ENCODE measurements at regions of chr2 and their contacts with region 1.

Region 1: GRCh38 chr2:65416945-65417344 is 15.5 kb downstream of the SPRED2 start:
- DNase-seq: no peak
- H3K4me3 ChIP-seq: no peak overlapping the region
- H3K4me3 Mint-ChIP-seq: peak overlapping the region in 1 of 2 donors; percentile 9
- H3K27ac ChIP-seq: no peak overlapping the region
- H3K27ac Mint-ChIP-seq: no peak overlapping the region
- H3K4me1 ChIP-seq: peaks cover 7 to 13% of the 10 kb centered on the region in 2 donors
- H3K4me1 Mint-ChIP-seq: peaks cover 13% of the 10 kb centered on the region
- H3K27me3 ChIP-seq: peaks cover 31 to 39% of the 10 kb centered on the region in 2 donors
- H3K27me3 Mint-ChIP-seq: peaks cover 32 to 42% (median 34%) of the 10 kb centered on the region in 3 donors
- CTCF ChIP-seq: no peak

Region 2: DNA sequence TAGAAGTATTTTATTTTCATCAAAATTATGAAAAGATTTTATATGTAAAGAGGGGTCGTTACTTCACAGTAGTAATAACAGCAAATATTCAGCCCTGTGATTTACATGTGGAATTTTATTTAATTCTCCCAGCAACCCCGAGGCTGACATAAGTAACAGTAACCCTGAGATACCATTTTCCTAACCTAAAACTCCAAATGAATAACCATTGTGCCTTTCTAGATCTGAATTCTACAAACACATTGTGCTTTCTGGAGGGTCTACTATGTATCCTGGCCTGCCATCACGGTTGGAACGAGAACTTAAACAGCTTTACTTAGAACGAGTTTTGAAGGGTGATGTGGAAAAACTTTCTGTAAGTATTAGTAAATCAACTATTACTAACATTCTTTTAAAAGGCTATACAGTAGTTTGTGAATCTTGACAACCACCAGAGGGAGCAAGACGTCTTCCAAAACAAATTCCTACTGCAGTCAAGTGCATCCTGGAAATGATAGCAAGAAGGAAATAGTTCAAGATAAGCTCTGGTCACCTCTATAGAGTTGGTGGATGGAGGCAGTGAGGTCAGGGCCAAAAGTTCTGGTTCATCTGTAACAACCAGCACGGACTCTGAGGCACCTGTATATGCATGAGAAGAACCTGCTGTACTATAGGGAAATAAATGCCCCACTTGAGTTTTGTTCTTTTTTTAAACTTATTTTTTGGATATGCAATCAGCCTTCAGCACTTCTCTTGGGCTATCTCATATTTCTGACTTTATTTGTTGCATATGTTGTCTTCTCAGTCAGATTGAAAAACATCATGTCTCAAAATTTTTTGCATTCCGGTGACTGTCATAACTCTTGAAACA is 151.9 kb before region 1 on chr2:
- intact Hi-C with region 1: no loop called
- DNase-seq: peak; percentile 15 to 40 (median 24)
- H3K4me3 ChIP-seq: no peak overlapping the region
- H3K4me3 Mint-ChIP-seq: no peak overlapping the region
- H3K27ac ChIP-seq: no peak overlapping the region
- H3K27ac Mint-ChIP-seq: peak overlapping the region in 1 of 7 donors; percentile 21
- H3K4me1 ChIP-seq: no peaks in the 10 kb centered on the region
- H3K4me1 Mint-ChIP-seq: no peaks in the 10 kb centered on the region
- H3K27me3 ChIP-seq: no peaks in the 10 kb centered on the region
- H3K27me3 Mint-ChIP-seq: peaks cover 0 to 2% (median 0%) of the 10 kb centered on the region in 3 donors
- CTCF ChIP-seq: peak; percentile 81

Region 3: DNA sequence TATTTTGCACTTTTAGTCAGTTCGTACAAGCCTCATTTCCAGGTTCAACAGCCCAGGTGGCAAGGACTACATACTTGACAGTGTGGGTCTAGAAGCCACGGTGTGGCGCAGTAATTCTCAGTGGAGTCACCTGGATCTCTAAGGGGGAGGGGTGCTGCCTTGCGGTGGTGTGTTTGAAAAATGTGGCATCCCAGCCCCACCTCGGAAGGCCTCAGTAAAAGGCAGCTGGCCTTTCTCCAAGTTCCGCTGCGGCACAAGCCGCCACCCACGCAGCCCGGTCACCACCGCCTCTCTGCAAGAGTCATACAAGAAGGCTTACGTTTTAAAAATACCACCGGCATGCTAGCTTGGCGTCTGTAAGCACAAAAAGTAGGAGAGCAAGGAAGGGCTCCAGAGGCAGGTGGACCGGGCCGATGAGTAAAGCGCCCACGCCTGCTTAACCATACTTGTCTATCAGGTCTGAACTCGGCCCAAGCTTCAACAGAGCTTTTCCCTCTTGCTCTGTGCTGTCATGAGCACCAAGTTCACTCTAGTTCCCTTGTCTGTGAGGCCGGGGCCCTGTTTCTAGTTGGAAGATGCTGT is 34.1 kb before region 1 on chr2:
- intact Hi-C with region 1: loop called in 1 of 2 experiments (anchors 5 kb)
- DNase-seq: peak; percentile 45 to 67 (median 55)
- H3K4me3 ChIP-seq: peak overlapping the region in 2 of 3 experiments; percentile 35 to 59
- H3K4me3 Mint-ChIP-seq: peak overlapping the region; percentile 65 to 85
- H3K27ac ChIP-seq: peak overlapping the region in 1 of 2 donors; percentile 6
- H3K27ac Mint-ChIP-seq: peak overlapping the region in 5 of 7 donors; percentile 17 to 76 (median 30)
- H3K4me1 ChIP-seq: peaks cover 48 to 56% of the 10 kb centered on the region in 2 donors
- H3K4me1 Mint-ChIP-seq: peaks cover 70% of the 10 kb centered on the region
- H3K27me3 ChIP-seq: no peaks in the 10 kb centered on the region
- H3K27me3 Mint-ChIP-seq: peaks cover 0 to 6% (median 2%) of the 10 kb centered on the region in 3 donors
- CTCF ChIP-seq: no peak

Region 4: GRCh38 chr2:65479524-65479923 is 62.6 kb after region 1 on chr2:
- intact Hi-C with region 1: no loop called
- DNase-seq: no peak
- H3K4me3 ChIP-seq: no peak overlapping the region
- H3K4me3 Mint-ChIP-seq: no peak overlapping the region
- H3K27ac ChIP-seq: no peak overlapping the region
- H3K27ac Mint-ChIP-seq: no peak overlapping the region
- H3K4me1 ChIP-seq: no peaks in the 10 kb centered on the region
- H3K4me1 Mint-ChIP-seq: peaks cover 5% of the 10 kb centered on the region
- H3K27me3 ChIP-seq: no peaks in the 10 kb centered on the region
- H3K27me3 Mint-ChIP-seq: peaks cover 3 to 8% (median 5%) of the 10 kb centered on the region in 3 donors
- CTCF ChIP-seq: no peak

Region 5: GRCh38 chr2:66324909-66325528 is 908.1 kb after region 1 on chr2:
- intact Hi-C with region 1: no loop called
- DNase-seq: no peak
- H3K4me3 ChIP-seq: no peak overlapping the region
- H3K4me3 Mint-ChIP-seq: no peak overlapping the region
- H3K27ac ChIP-seq: no peak overlapping the region
- H3K27ac Mint-ChIP-seq: no peak overlapping the region
- H3K4me1 ChIP-seq: no peaks in the 10 kb centered on the region
- H3K4me1 Mint-ChIP-seq: no peaks in the 10 kb centered on the region
- H3K27me3 ChIP-seq: no peaks in the 10 kb centered on the region
- H3K27me3 Mint-ChIP-seq: peaks cover 0 to 3% (median 2%) of the 10 kb centered on the region in 3 donors
- CTCF ChIP-seq: no peak

Measured in CD14-positive monocyte (primary cell).